Sigmoid colon (tissue), 7 donors: ENCODE measurements at regions of chr4 and their contacts with region 1.

Region 1: DNA sequence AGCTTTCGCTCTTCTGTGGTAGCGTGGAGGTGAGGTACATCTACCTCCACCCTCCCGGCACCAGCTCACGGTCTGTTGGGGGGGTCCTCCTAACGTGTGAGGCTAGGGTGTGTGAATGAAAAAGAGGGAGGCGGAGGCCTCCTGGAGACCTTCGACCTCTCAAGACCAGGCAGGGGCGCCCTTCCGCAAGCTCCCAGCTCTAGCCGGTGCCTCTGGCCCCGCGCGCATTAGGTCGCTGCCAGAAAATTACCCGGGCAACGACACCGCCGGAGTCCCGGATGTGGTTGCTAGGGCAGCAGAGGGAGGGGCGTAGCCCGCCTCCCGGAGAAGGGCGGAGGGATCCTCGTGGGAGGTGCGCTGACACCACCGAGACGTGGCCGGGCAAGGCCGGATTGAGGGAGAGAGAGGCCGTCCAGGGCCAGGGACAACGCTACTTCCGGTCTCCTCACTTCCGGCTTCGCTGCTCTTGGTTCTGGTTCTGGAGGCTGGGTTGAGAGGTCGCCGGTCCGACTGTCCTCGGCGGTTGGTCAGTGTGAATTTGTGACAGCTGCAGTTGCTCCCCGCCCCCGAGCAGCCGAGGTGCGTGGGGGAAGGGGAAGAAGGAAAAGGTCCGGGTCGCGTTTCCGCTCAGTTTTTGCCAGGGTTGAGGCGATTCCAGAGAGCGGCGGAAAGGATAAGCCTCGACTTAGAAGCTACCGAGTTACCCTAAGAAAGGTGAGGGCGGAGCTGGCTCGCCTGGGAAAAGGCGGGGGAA is at the starts of genes ARFIP1 and TIGD4:
- DNase-seq: peak; percentile 99
- H3K4me3 ChIP-seq: peak within 1 kb of the TSS; percentile 60 to 89 (median 80)
- H3K27ac ChIP-seq: peak within 1 kb of the TSS; percentile 91 to 94 (median 93)
- H3K4me1 ChIP-seq: peaks cover 0 to 33% (median 24%) of the 10 kb centered on the region in 4 donors
- H3K27me3 ChIP-seq: no peaks in the 10 kb centered on the region
- CTCF ChIP-seq: no peak
- EP300 ChIP-seq: peak in 1 of 4 donors; percentile 86
- POLR2A ChIP-seq: no peak
- total RNA-seq, gene ARFIP1: 22.1 to 33.5 (median 28.3) TPM
- total RNA-seq, gene TIGD4: 0.33 to 0.83 (median 0.38) TPM

Region 2: GRCh38 chr4:151099229-151099975 is 1680.3 kb before region 1 on chr4 and contains the start of gene RPS3A:
- intact Hi-C with region 1: loop called (anchors 5 kb)
- DNase-seq: peak; percentile 98
- H3K4me3 ChIP-seq: peak within 1 kb of the TSS; percentile 67 to 76 (median 70)
- H3K27ac ChIP-seq: peak within 1 kb of the TSS; percentile 85 to 91 (median 88)
- H3K4me1 ChIP-seq: peaks cover 0 to 33% (median 23%) of the 10 kb centered on the region in 4 donors
- H3K27me3 ChIP-seq: no peaks in the 10 kb centered on the region
- CTCF ChIP-seq: peak; percentile 34 to 71 (median 40)
- EP300 ChIP-seq: peak in 1 of 4 donors; percentile 46
- POLR2A ChIP-seq: peak; percentile 54 to 78
- total RNA-seq, gene RPS3A: 4,012 to 6,800 (median 5,576) TPM

Region 3: GRCh38 chr4:152535903-152536544 is 243.7 kb before region 1 on chr4 and contains the start of gene FBXW7:
- intact Hi-C with region 1: loop called (anchors 2 kb)
- DNase-seq: peak; percentile 99
- H3K4me3 ChIP-seq: peak within 1 kb of the TSS; percentile 93 to 98 (median 96)
- H3K27ac ChIP-seq: peak within 1 kb of the TSS; percentile 93 to 97 (median 96)
- H3K4me1 ChIP-seq: peaks cover 0 to 45% (median 30%) of the 10 kb centered on the region in 4 donors
- H3K27me3 ChIP-seq: no peaks in the 10 kb centered on the region
- CTCF ChIP-seq: no peak
- EP300 ChIP-seq: peak in 2 of 4 donors; percentile 49 to 80
- POLR2A ChIP-seq: peak; percentile 71 to 84
- total RNA-seq, gene FBXW7: 74.9 to 122 (median 81.4) TPM

Region 4: GRCh38 chr4:152807294-152807829 is 27.7 kb after region 1 on chr4:
- intact Hi-C with region 1: no loop called
- DNase-seq: no peak
- H3K4me3 ChIP-seq: no peak overlapping the region
- H3K27ac ChIP-seq: no peak overlapping the region
- H3K4me1 ChIP-seq: peaks cover 0 to 37% (median 12%) of the 10 kb centered on the region in 4 donors
- H3K27me3 ChIP-seq: no peaks in the 10 kb centered on the region
- CTCF ChIP-seq: no peak
- EP300 ChIP-seq: no peak
- POLR2A ChIP-seq: no peak

Region 5: DNA sequence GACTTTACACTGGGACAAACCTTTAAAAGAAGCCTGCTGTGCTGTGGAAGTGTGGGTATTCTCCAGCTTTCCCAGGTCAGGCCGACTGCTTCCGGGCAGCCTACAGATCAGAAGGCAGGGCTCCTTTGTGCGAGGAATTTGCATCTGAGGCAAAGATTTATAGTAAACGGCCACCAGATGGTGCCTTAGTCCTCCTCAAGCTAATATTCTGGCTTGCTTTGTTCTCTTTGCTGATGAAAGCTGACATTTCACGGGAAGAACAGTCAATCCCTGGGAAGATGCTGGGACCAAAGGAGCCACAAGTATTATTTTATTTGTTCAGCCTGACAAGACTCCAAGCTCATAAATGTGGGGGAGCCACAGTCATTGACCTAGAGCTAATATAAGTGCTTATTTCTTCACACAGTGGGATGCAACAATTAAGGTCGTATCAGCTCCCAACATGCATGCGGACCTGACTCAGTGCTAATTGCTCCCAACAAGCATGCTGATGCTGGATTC is 303.8 kb after region 1 on chr4:
- intact Hi-C with region 1: loop called (anchors 1 kb)
- DNase-seq: no peak
- H3K4me3 ChIP-seq: no peak overlapping the region
- H3K27ac ChIP-seq: no peak overlapping the region
- H3K4me1 ChIP-seq: peaks cover 0 to 10% (median 3%) of the 10 kb centered on the region in 4 donors
- H3K27me3 ChIP-seq: no peaks in the 10 kb centered on the region
- CTCF ChIP-seq: peak; percentile 32 to 69 (median 62)
- EP300 ChIP-seq: no peak
- POLR2A ChIP-seq: no peak

Region 6: DNA sequence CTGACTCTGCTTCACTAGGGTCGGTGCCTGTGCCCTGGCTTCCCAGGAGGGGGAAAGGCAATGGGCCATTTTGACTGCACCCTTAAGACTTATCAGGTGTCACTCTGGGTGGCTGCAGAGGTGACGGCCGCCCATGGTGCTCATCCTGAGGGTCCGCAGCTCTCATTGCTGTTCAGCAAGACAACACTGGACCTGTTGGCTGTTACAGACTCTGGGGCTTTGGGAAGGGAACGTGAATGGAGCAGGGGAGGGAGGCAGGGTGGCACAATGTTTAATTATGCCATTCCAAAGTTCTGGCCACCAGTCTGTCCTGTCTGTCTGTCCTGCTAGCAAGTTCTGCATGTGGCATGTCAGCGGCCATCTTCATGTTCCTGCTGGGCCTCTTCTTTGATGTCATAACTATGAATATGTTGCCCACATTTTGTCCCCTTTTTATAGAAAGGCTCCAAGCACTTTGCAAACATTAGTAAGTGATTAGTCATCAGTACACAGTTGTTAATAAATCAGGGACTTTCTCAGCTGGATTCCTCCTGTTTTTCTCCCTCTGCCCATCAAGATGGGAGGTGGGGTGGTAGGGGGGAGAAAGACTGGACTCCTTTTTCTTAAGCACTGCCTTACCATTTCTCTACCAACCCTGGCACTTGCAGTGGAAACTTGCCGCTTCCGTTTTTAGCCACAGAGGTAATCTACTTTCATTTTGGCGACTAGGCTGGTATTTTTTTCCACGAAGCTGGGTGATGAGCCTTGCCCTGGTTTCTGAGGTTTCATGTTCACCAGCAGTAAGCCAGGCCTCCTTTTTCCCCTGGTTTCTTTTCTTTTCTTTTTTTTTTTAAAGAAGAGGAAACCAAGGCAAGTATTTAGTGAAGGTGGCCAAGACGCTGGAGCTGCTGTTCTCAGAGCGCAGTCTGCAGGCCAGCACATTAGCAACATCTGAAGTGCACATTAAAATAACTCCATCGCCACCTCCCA is 335.9 kb after region 1 on chr4:
- intact Hi-C with region 1: loop called (anchors 10 kb)
- DNase-seq: no peak
- H3K4me3 ChIP-seq: peak overlapping the region in 3 of 4 donors; percentile 18 to 38 (median 35)
- H3K27ac ChIP-seq: peak overlapping the region; percentile 58 to 81 (median 74)
- H3K4me1 ChIP-seq: peaks cover 0 to 19% (median 17%) of the 10 kb centered on the region in 4 donors
- H3K27me3 ChIP-seq: no peaks in the 10 kb centered on the region
- CTCF ChIP-seq: no peak
- EP300 ChIP-seq: no peak
- POLR2A ChIP-seq: no peak